ENCODE measurements at regions of chr6 and their contacts with region 1.

Region 1: DNA sequence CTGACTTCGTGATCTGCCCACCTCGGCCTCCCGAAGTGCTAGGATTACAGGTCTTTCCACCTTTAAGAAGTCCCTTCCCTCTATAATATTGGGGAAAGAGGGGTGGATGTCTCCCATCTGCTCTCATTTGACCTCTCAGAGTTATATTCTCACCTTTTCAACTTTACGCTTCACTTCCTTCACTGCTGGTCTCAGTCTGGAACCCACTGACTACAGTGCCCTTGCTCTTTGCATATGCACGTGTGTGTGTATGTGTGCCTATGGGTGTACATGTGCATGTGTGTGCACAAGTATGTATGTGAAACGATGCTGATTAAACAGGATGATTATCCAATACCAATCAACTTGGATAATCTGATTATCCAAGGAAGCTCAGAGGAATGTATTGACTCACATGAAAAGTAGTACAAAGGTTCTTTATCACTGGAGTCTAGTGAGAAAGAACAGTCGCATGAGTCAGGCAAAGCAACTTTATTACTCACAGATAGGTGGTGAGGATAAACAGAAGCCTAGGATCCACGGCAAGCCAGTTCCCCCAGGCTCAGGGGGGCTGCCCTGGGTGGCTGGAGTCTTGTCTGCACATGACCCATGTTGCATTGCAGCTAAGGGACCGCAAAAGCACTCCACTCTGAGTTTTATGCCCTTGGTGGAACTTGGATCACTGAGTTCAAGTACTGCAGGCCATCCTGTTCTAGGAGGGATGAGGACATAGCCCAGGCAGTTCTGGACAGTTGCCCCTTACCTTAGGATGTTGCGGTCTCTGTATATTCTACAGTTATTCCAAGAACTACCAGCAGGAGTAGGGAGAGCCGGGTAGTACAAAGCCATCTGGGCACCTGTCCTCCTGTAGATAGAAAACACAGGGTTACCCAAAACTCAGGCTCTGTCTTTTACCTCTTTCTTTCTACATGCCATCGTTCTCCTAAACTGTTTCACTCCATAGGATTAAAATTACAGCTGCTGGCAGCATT is 50.9 kb downstream of the SNRNP48 start:
- DNase-seq: peak; percentile 94
- ATAC-seq: peak; percentile 75
- H3K4me3 ChIP-seq: no peak overlapping the region
- H3K27ac ChIP-seq: peak overlapping the region; percentile 30
- H3K4me1 ChIP-seq: peaks cover 46% of the 10 kb centered on the region
- H3K27me3 ChIP-seq: no peaks in the 10 kb centered on the region
- CTCF ChIP-seq: no peak; the same call in 1 of the 2 replicates

Region 2: DNA sequence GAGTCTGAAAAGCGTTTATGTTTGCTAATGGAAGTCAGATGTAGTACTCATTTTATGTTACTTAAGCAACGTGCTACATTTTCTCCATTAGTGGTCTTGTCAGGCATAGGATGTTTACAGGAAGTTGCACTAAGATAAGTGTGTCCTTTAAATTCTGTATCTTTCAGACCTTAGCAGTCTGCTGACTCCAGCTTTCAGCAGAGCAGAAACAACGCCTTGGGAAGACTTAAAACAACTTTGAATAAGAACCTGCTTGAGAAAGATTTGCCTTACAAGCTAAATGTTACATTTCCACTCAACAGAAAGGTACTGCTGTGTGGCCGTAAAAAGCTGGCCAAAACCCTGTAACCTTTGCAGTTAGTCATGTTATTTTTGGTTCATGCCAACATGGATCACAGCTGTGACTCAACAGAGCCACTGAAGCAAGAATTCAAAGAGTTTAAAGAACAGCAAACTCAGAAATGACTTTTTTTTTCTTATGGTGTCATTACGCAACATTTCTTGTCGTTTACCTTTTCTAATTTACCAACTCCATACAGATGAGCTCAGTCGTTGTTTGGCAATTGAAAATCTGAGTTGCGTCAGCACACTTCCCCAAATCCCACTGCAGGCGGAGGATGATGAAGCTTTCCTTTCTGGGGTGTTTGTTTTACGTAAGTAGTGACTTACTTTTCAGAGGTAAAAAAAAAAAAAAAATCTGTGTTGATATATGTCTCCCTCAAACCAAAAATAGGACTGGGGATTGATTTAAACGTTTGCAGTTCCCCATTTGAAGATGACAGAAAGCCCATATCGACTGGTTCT is 57.1 kb after region 1 on chr6:
- CTCF ChIA-PET with region 1: no interaction called
- POLR2A ChIA-PET with region 1: no interaction called
- intact Hi-C with region 1: loop called (anchors 5 kb)
- DNase-seq: peak; percentile 90
- ATAC-seq: peak; percentile 88
- H3K4me3 ChIP-seq: peak overlapping the region; percentile 45
- H3K27ac ChIP-seq: peak overlapping the region; percentile 94
- H3K4me1 ChIP-seq: peaks cover 21% of the 10 kb centered on the region
- H3K27me3 ChIP-seq: no peaks in the 10 kb centered on the region
- CTCF ChIP-seq: no peak

Region 3: DNA sequence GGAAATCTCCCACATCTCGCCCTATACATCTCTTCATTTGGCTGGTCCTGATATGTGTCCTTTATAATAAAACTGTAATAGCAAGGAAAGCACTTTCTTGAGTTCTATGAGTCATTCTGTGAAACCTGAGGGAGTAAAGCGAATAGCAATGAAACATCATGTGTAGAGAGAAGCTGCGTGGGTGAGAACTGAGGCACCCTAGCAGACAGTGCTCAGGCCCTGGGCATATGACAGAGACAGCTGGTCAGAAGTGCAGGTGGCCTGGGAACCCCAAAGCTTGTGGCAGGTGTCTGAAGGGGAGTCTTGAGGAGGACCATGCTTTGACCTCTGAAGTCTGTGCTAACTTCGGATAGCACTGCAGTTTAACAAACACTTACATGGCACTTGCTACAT is 424.6 kb after region 1 on chr6:
- CTCF ChIA-PET with region 1: no interaction called
- POLR2A ChIA-PET with region 1: no interaction called
- intact Hi-C with region 1: no loop called
- DNase-seq: no peak
- ATAC-seq: no peak
- H3K4me3 ChIP-seq: no peak overlapping the region
- H3K27ac ChIP-seq: no peak overlapping the region
- H3K4me1 ChIP-seq: 0 out of 2 replicates have a peak, but pooled peaks cover 7% of the 10 kb centered on the region
- H3K27me3 ChIP-seq: no peaks in the 10 kb centered on the region
- CTCF ChIP-seq: no peak